ENCODE measurements at regions of chr20 and their contacts with region 1.

Region 1: DNA sequence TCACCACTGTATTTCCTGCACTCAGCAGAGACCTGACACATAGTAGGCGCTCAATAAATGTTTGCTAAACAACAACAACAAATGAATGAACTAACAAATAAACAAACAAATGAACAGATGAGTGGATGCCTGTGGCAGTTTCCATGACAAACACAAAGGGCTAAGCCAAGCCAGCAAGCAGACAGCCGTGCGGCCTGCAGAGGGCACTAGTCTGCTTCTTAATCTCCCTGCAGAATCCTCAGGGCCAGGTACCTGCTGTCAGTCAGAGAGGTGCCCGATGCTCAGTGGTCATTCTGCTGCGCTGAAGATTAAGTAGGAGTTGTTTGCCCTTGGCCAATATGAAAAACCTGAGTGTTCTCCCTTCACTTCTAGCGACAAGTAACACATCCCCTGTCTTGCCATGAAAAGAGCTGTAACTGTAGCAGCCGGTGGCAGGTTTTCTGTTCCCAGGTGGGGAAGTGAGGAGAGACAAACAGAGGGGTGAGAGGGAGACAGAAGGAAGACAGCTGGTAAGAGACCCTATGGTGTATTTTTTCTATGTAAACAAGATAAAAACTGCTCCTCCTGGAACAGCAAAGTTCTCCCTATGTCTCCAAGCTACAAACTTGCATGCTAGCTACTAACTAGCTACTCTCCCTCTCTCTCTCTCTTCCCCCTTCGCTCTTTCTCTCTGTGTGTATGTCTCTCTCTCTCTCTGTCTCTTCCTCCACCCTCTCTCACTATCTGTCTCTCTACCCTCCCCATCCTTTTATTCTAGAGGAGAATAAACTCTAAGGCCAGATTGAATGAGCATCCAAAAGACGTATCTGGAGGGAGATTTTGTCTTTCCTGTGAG is at the start of gene MC3R:
- DNase-seq: peak; percentile 42 to 61 (median 47)
- ATAC-seq: peak; percentile 94
- H3K4me3 ChIP-seq: no peak within 1 kb of the TSS
- H3K27ac ChIP-seq: no peak within 1 kb of the TSS
- H3K4me1 ChIP-seq: no peaks in the 10 kb centered on the region; a peak in 1 of 5 replicates
- H3K27me3 ChIP-seq: peaks cover 0 to 7% of the 10 kb centered on the region in 2 experiments; a peak in 2 of 5 replicates
- CTCF ChIP-seq: peak; percentile 64 to 79 (median 64)
- EP300 ChIP-seq: no peak
- POLR2A ChIP-seq: no peak
- RAD21 ChIP-seq: peak in 1 of 2 experiments; percentile 60; a peak in 2 of 4 replicates
- polyA plus RNA-seq, gene MC3R: not detected

Region 2: DNA sequence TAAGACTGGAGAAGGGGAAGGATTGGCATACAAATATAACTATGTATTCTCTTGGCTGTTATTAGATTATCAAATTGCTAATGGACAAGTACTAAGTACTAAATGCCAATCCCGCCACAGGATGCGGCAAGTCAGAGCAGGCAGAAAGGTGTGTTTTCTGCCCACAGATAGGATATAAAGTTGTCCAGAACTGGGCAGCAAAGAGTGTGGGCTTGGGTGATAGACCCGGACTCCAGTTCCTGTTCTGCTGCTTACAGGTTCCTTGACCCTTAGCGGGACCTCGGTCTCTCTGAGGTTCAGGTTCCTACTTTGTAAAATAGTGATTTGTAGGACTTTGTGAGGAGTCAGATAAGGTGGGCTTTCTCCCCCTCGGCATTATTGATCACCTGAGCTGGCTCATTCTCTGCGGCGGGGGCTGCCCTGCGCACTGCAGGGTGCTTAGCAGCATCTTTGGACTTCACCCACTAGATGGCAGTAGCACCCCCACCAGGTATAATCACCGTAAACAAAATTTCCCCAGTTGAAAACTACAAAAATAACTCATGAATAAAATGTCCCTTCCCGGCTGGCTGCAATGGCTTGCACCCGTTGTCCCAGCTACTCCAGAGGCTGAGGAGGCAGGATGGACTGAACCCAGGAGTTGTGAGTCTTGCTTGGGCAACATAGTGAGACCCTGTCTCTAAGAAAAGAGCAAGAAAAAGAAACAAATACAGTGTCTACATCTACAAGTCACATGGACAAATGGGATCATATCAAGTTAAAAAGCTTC is 1579.7 kb before region 1 on chr20:
- CTCF ChIA-PET with region 1: no interaction called
- POLR2A ChIA-PET with region 1: no interaction called
- in situ Hi-C with region 1: loop called (anchors 25 kb)
- intact Hi-C with region 1: no loop called
- DNase-seq: peak; percentile 23 to 44 (median 30)
- ATAC-seq: peak; percentile 91
- H3K4me3 ChIP-seq: no peak overlapping the region
- H3K27ac ChIP-seq: no peak overlapping the region
- H3K4me1 ChIP-seq: no peaks in the 10 kb centered on the region
- H3K27me3 ChIP-seq: no peaks in the 10 kb centered on the region
- CTCF ChIP-seq: peak; percentile 54 to 65 (median 60)
- EP300 ChIP-seq: no peak
- POLR2A ChIP-seq: no peak
- RAD21 ChIP-seq: peak in 1 of 2 experiments; percentile 43; a peak in 2 of 4 replicates

Region 3: DNA sequence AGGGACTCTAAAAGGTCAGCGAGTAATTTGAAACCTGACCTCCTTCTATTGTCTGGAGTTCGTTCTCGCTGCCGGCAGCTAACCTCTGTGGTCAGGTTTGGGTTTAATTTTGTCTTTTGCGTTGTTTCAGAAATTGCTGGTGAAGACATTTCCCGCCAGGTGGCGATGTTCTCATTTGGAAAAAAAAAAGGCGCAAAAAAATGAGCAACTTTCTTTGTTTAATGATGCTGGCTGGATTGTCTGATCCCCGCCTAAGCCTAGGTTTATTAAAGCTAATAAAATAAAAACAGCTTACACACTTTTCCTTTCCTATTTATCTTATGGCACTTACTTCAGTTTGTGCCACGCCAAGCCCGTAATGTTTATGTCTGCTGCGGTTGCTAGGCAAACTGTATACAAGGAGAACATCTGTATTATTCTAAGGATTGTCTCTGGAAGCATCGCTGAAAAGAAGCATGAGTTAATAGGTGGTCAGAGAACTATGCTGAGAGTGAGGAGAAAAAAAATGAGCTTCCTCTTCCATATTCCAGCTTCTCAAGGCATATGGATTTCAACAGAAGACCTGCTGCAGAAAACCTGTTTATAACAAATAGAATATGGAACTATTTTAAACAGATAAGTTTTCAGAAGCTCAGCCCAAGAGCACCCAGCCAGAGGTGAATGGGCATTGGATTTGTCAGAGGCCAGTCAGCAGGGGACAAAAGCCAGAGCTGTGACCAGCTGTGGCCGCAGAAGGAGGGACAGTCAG is 1567.1 kb before region 1 on chr20:
- CTCF ChIA-PET with region 1: interaction called, 3 read pairs
- POLR2A ChIA-PET with region 1: no interaction called
- in situ Hi-C with region 1: no loop called
- intact Hi-C with region 1: loop called (anchors 2 kb)
- DNase-seq: peak; percentile 11 to 61 (median 14)
- ATAC-seq: peak; percentile 64
- H3K4me3 ChIP-seq: no peak overlapping the region
- H3K27ac ChIP-seq: no peak overlapping the region
- H3K4me1 ChIP-seq: no peaks in the 10 kb centered on the region
- H3K27me3 ChIP-seq: no peaks in the 10 kb centered on the region
- CTCF ChIP-seq: peak; percentile 47 to 67 (median 49); a peak in 5 of 6 replicates
- EP300 ChIP-seq: no peak
- POLR2A ChIP-seq: no peak
- RAD21 ChIP-seq: peak in 1 of 2 experiments; percentile 53; a peak in 3 of 4 replicates